Left colon (tissue), 2 donors: ENCODE measurements at regions of chr22 and their contacts with region 1.

Region 1: DNA sequence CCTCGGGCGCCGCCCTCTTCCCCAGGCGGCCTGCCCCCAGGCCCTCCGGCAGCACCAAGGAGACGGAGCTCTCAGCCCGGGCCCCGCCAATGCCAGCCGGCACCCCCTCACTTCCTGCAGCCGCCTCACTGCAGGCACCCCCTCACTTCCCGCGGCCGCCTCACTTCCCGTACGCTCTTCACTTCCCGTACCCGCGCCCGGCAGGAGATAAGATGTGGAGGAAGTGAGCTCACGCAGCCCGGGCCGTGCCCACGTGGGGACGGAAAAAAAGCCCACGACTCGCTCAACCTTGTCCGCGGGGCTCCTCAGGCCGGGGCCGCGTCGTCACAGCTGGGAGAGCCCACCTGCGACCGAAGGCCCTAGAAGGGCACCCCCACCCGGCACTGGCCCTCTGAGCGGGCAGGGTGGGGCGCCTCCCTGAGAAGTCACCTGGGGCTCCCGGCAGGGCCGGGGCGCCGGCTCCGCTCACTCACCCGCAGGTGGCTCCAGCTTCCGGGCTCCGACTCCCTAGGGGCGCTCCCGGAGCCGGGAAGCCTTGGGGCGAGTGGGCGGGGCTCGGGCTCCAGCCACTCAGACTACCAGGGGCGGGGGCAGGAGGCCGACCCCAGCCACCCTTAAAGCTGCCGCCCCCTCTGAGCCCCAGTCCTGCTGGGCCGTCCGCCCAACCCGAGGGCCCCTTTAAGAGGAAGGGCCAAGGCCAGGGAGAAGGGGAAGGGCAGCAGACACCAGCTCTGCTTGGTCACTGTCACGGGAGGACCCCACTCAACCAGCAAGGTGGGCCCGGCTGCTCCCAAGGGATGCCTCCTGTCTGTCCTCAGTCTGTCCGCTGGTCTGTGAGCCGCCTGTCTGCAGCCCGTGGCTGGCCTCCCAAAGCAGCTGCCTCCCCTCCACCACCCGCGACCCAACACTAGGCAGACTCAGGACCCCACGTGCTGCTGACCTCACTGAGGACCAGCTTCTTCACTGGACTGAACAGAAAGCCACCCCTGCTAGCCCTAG is 31.4 kb downstream of the PISD start:
- DNase-seq: peak; percentile 78 to 85
- ATAC-seq: peak; percentile 71

Region 2: DNA sequence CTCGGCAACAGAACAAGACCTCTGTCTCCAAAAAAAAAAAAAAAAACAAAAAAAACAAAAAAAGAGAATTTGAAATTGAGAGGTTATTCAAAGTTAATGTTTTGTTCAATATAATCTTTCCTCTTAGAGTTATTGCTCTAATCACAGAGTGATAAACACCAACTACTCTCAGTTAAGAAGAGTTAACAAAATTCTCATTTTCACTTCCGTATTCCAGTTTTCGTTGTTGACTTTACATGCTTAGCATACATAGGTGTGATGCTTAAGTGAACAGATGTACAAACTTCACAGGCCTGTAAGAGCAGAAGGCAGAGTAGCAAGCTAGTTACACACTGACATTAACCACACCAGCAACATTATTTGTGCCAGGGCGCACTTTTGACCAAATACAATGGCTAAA is 153.3 kb before region 1 on chr22:
- intact Hi-C with region 1: no loop called
- DNase-seq: no peak
- ATAC-seq: peak; percentile 92

Region 3: DNA sequence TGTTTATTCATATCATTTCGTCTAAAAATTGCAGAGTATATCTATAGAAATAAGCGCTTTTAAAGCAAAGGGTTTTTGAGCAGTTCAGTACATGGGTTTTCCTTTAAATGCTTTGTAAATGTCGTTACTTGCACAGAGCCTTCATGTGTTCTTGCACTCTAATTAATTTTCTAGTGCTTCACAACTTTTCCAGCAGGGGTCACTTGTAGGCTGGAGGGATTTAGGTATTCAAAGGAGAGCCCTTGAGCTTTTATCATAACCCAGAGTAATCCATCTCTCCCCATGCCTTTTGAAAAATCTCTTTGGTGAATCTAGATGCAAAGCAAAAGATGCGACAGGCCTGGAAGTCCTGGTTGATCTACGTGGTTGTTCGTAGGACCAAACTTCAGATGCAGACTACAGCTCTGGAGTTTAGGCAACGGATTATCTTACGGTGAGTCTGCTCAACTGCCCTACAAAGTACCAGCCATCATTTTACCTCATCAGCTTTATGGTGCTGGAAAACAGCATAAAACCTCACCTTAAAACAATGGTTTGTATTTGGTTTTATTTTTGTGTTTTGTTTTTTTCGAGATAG is 73.9 kb before region 1 on chr22:
- intact Hi-C with region 1: loop called in 1 of 2 experiments (anchors 5 kb)
- DNase-seq: no peak
- ATAC-seq: peak; percentile 47